ENCODE measurements at regions of chr18 and their contacts with region 1.

Region 1: GRCh38 chr18:22194151-22194598 is 24.8 kb downstream of the GATA6 start:
- DNase-seq: no peak
- H3K4me3 ChIP-seq: no peak overlapping the region
- H3K27ac ChIP-seq: no peak overlapping the region
- H3K4me1 ChIP-seq: no peaks in the 10 kb centered on the region
- H3K27me3 ChIP-seq: no peaks in the 10 kb centered on the region
- CTCF ChIP-seq: no peak
- POLR2A ChIP-seq: no peak

Region 2: DNA sequence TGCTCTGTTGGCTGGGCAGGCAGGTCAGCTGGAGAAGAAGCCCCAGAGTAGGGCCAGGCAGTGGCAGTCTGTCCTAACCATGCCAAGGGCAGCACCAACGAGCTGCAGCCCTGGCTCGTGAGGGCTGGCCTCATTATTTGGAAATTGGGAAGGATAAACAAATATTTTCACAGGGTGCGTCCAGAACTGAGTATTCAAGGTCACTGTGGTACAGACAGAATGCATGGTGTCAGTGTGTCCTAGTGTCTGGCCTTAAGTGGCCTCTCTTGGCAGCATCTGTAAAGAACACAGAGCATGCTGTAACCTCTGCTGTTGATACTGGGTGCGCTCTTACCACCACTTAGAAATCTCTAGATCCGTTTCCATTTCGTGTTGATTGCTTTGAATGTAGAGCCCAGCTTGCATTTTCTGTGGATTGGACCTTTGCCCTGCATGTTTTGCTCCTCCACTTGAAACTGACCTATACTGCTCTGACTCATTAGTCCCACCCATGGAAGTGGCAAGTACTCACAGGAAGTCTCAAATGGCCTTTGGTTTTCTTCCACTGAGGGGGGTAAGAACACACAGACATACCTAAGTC is 864.0 kb before region 1 on chr18:
- intact Hi-C with region 1: no loop called
- DNase-seq: no peak
- H3K4me3 ChIP-seq: no peak overlapping the region
- H3K27ac ChIP-seq: no peak overlapping the region
- H3K4me1 ChIP-seq: no peaks in the 10 kb centered on the region
- H3K27me3 ChIP-seq: no peaks in the 10 kb centered on the region
- CTCF ChIP-seq: no peak
- POLR2A ChIP-seq: no peak

Region 3: DNA sequence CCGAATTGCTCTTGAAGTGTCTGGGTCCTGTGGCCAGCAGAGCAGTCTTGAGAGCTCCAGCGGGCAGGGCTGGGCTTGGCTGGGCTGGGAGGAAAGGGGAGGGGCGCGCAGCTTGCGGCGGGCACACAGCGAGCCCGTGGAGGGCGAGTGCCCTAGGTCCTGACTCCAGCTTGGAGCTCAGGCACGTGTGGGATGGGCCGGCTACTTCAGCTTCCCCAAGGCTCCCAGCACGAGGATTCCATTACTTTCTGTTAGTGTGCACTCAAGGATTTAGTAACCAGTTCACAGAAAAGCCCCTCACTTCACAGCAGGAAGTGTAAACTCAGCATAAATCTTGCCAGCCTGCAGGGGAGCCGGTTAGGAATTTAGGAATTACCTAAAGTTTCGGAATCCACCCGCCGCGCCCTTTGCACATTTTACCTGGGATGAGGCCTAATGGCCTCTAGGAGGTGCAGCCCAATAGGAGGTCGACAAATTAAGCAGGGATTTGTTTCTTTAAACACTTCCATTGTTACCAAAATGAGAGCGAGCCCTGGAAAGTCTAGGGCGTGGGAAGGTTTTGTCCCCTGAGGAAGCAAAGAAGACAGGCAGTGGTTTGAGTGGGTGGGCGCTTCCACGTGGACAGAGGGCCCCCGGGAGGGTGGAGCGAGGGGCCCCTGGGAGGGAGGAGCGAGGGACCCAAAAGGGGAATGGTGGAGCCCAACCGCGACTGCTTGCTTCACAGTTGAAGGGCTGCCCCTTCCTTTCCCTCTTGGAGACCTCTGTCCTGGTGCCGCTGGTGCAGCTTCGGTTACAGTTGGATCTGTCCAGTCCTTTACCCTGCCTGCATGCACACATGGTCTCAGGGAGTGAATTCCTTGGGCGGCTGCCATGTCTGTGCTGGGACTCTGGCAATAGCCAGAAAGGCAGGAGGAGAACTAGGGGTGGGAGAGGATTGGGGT is 130.3 kb after region 1 on chr18:
- intact Hi-C with region 1: loop called (anchors 10 kb)
- DNase-seq: peak in 1 of 2 donors; percentile 94
- H3K4me3 ChIP-seq: peak overlapping the region in 1 of 2 donors; percentile 26
- H3K27ac ChIP-seq: no peak overlapping the region
- H3K4me1 ChIP-seq: peaks cover 9% of the 10 kb centered on the region
- H3K27me3 ChIP-seq: no peaks in the 10 kb centered on the region
- CTCF ChIP-seq: no peak
- POLR2A ChIP-seq: no peak

Measured in vagina (tissue), 2 donors.